Caco-2 (cell line): ENCODE measurements at regions of chr10 and their contacts with region 1.

Region 1: DNA sequence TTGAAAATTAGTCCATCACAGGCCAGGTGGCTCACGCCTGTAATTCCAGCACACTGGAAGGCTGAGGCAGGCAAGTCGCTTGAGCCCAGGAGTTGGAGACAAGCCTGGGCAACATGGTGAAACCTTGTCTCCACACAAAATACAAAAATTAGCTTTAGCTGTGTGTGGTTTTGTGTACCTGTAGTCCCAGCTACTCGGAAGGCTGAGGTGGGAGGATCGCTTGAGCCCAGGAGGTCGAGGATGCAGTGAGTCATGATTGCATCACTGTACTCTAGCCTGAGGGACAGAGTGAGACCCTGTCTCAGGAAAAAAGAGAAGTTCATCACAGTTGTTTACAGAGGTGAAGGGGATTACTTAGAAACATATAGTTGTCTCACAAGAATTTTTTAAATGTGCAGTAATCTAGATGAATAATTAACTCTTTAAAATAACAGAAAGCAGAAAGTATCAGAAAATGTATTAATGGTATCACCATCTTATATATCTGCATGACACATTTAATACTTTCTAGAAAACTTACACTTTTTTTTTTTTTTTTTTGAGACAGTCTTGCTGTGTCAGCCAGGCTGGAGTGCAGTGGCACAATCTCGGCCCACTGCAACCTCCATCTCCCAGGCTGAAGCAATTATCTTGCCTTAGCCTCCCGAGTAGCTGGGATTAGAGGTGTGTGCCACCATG is 8.9 kb downstream of the LCOR start:
- DNase-seq: peak; percentile 56 to 60
- H3K4me3 ChIP-seq: no peak overlapping the region
- H3K4me3 Mint-ChIP-seq: peak overlapping the region; percentile 18
- H3K27ac Mint-ChIP-seq: no peak overlapping the region
- H3K4me1 ChIP-seq: peaks cover 41% of the 10 kb centered on the region
- H3K4me1 Mint-ChIP-seq: peaks cover 35% of the 10 kb centered on the region
- H3K27me3 ChIP-seq: no peaks in the 10 kb centered on the region
- H3K27me3 Mint-ChIP-seq: no peaks in the 10 kb centered on the region
- CTCF ChIP-seq: no peak

Region 2: DNA sequence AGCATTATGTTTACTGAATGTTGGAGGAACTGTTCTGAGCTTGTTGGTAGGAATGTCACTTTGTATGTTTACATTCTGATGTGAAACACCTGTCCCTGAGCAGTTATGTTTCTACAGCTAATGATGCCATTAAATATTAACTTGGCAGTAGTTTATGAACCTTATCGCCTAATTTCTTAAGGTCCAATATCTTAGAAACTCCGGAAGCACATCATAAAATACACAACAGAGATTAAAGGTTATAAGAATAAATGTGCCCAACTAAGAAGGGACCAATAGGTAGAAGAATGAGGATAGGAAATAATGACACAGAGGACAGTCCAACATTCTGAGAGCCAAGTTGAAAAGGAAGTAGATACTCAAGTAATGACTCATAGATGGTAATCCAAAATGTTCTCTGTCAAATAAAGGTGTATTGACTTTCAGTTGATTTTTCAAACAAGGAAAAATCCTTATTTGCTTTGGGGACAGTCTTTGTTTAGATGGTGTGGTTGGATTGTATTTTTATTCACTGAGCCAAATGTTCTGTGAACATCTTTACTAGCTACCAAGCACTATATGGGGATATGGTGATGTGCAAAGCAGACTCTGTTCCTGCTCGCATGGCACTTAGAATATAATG is 23.1 kb after region 1 on chr10:
- CTCF ChIA-PET with region 1: interaction called, 3 read pairs
- POLR2A ChIA-PET with region 1: no interaction called
- intact Hi-C with region 1: loop called (anchors 1 kb)
- DNase-seq: peak in 1 of 2 experiments; percentile 66
- H3K4me3 ChIP-seq: no peak overlapping the region
- H3K4me3 Mint-ChIP-seq: peak overlapping the region; percentile 64
- H3K27ac Mint-ChIP-seq: peak overlapping the region; percentile 94
- H3K4me1 ChIP-seq: peaks cover 20% of the 10 kb centered on the region
- H3K4me1 Mint-ChIP-seq: peaks cover 39% of the 10 kb centered on the region
- H3K27me3 ChIP-seq: no peaks in the 10 kb centered on the region
- H3K27me3 Mint-ChIP-seq: no peaks in the 10 kb centered on the region
- CTCF ChIP-seq: no peak

Region 3: GRCh38 chr10:96902731-96903358 is 61.9 kb after region 1 on chr10:
- CTCF ChIA-PET with region 1: no interaction called
- POLR2A ChIA-PET with region 1: no interaction called
- intact Hi-C with region 1: loop called (anchors 5 kb)
- DNase-seq: no peak
- H3K4me3 ChIP-seq: no peak overlapping the region
- H3K4me3 Mint-ChIP-seq: no peak overlapping the region
- H3K27ac Mint-ChIP-seq: no peak overlapping the region
- H3K4me1 ChIP-seq: peaks cover 29% of the 10 kb centered on the region
- H3K4me1 Mint-ChIP-seq: peaks cover 41% of the 10 kb centered on the region
- H3K27me3 ChIP-seq: no peaks in the 10 kb centered on the region
- H3K27me3 Mint-ChIP-seq: no peaks in the 10 kb centered on the region
- CTCF ChIP-seq: no peak

Region 4: GRCh38 chr10:97355571-97355975 is 514.6 kb after region 1 on chr10:
- CTCF ChIA-PET with region 1: no interaction called
- POLR2A ChIA-PET with region 1: no interaction called
- intact Hi-C with region 1: no loop called
- DNase-seq: peak in 1 of 2 experiments; percentile 27
- H3K4me3 ChIP-seq: no peak overlapping the region
- H3K4me3 Mint-ChIP-seq: no peak overlapping the region
- H3K27ac Mint-ChIP-seq: peak overlapping the region; percentile 26
- H3K4me1 ChIP-seq: no peaks in the 10 kb centered on the region
- H3K4me1 Mint-ChIP-seq: no peaks in the 10 kb centered on the region
- H3K27me3 ChIP-seq: no peaks in the 10 kb centered on the region
- H3K27me3 Mint-ChIP-seq: no peaks in the 10 kb centered on the region
- CTCF ChIP-seq: peak; percentile 14 to 60